Activated T-helper 1 cell treated with anti-CD3 and anti-CD28 coated beads, Interleukin-12 subunit alpha, Interleukin-12 subunit beta, Interleukin-2, Interleukin-4 antibody, amounts not matched to agents 30 ng/mL and 10 ng/mL and 1 ng/mL, durations not matched to agents 14 hours and 24 hours and 36 hours (primary cell): ENCODE measurements at regions of chr6 and their contacts with region 1.

Region 1: DNA sequence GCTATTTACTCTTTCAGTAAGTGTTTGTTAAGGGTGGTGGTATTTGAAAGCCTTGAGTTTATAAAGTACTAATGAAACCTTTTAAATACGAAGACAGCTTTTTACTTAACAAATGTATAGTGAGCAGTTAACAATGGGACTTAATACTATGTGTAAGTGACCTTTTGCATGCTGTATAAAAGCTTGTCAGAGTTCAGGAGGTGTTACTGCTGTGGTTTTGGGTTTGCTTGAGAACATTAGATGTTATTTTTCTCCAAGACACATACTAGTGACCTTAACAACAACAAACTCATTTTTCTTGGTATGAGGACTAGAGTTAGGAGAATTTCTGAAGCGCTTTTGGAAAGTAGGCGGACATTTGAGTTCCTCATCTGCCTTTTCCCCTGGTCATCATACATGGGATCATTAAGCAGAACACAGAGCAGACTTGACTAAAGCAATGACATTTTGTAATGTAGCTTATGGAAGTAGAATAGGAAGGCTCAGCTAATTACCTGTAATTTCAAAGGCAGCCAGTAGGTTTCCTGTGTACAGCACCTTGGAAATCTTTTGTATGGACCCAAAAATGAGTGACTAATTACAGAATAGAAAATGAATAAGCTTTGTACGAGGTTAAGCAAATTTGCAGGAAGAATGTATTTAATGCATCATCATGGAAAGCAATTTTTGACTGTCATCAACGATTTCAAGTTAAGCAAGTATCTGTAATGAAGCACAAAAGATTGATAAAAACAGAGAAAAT is 14.1 kb downstream of the CDYL start:
- DNase-seq: no peak
- H3K4me3 Mint-ChIP-seq: no peak overlapping the region
- H3K27ac Mint-ChIP-seq: no peak overlapping the region
- H3K4me1 Mint-ChIP-seq: peaks cover 17% of the 10 kb centered on the region
- H3K27me3 Mint-ChIP-seq: no peaks in the 10 kb centered on the region

Region 2: GRCh38 chr6:4606821-4607704 is 183.3 kb before region 1 on chr6:
- intact Hi-C with region 1: no loop called
- DNase-seq: no peak
- H3K4me3 Mint-ChIP-seq: no peak overlapping the region
- H3K27ac Mint-ChIP-seq: no peak overlapping the region
- H3K4me1 Mint-ChIP-seq: peaks cover 4% of the 10 kb centered on the region
- H3K27me3 Mint-ChIP-seq: no peaks in the 10 kb centered on the region

Region 3: GRCh38 chr6:4620284-4621151 is 169.8 kb before region 1 on chr6:
- intact Hi-C with region 1: no loop called
- DNase-seq: no peak
- H3K4me3 Mint-ChIP-seq: no peak overlapping the region
- H3K27ac Mint-ChIP-seq: no peak overlapping the region
- H3K4me1 Mint-ChIP-seq: no peaks in the 10 kb centered on the region
- H3K27me3 Mint-ChIP-seq: peaks cover 4% of the 10 kb centered on the region

Region 4: DNA sequence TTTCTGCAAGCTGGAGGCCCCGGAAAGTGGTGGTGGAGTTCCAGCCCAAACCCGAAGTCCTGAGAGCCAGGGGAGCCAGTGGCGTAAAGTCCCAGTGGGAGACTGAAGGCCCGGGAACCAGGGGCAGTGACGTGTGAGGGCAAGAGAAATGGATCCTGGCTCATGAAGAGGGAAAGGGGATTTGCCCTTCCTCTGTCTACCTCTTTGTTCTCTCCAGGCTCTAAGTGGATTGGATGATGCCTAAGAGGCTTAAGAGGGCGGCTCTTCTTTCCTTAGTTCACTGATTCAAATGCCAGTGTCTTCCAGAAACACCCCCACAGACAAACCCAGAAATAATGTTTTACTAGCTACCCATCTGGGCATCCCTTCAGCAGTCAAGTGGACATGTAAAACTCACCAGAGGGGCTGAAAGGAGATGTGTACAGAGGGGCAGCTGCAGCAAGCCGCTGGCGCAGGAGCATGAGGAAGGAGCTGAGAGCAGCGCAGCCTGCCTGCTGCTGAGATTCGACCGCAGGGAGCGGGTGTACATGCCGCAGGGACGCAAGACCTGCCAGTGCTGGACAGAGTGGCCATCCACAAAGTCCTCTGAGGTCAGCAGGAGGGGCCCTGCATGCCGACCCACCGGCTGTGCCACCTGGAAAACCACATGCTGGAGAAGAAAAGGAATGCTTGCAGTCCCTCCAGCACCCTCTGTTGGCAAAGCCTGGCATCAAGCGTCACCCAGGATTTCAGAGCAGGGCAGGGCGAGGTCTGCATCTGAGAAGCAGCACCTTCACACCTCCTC is 15.4 kb after region 1 on chr6:
- intact Hi-C with region 1: no loop called
- DNase-seq: no peak
- H3K4me3 Mint-ChIP-seq: no peak overlapping the region
- H3K27ac Mint-ChIP-seq: no peak overlapping the region
- H3K4me1 Mint-ChIP-seq: peaks cover 37% of the 10 kb centered on the region
- H3K27me3 Mint-ChIP-seq: peaks cover 2% of the 10 kb centered on the region

Region 5: DNA sequence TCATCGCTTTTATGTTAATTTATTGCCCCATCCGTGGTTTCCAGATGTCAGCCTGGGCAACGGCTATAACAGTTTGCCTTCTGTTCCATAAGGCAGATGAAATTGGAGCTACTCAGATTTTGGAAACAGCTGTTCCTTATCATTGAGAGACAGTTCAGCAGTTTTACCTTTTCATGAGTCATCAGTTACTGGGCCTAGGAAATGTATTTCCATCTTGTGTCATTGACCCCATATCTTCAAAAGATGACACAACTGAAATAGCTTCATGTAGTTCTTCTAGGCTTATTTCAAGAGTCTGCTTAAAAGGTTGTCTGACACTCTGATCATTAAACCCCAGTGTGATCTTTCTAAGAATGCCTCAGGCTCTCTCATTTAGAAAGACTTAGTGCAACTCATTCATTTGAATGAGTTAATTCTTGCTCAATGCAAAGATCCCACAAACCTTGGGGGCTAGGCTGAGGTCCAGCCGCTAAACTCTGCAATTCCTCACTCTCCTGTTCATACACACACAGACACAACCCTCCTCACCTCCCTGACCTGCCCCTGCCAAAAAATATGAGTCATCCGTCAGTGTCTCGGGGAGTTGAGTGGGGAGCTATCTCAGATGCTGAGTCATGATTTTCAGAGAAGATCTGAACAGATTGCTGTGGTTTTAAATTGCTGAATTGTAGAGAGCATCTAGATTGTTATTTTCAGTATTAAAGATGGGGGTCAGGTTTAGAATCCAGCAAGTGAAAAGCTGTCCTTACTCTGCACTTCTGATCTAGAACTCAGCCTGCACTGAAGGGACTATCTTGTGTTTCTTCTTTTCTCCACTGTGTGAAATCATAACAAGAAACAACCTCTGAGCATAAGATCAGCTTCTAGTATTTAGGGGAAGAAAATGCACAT is 151.7 kb after region 1 on chr6:
- intact Hi-C with region 1: loop called (anchors 1 kb)
- DNase-seq: peak; percentile 26
- H3K4me3 Mint-ChIP-seq: peak overlapping the region; percentile 4
- H3K27ac Mint-ChIP-seq: peak overlapping the region; percentile 20
- H3K4me1 Mint-ChIP-seq: peaks cover 44% of the 10 kb centered on the region
- H3K27me3 Mint-ChIP-seq: no peaks in the 10 kb centered on the region

Region 6: GRCh38 chr6:5085193-5085647 is 294.9 kb after region 1 on chr6 and contains the start of gene PPP1R3G:
- intact Hi-C with region 1: no loop called
- DNase-seq: no peak
- H3K4me3 Mint-ChIP-seq: peak within 1 kb of the TSS; percentile 81
- H3K27ac Mint-ChIP-seq: peak within 1 kb of the TSS; percentile 18
- H3K4me1 Mint-ChIP-seq: no peaks in the 10 kb centered on the region
- H3K27me3 Mint-ChIP-seq: peaks cover 43% of the 10 kb centered on the region
- total RNA-seq, gene PPP1R3G: not detected in 2 replicates